Mammary epithelial cell (primary cell): ENCODE measurements at regions of chr13 and their contacts with region 1.

Region 1: GRCh38 chr13:34357435-34358232 is 539.7 kb downstream of the RFC3 start:
- DNase-seq: peak; percentile 79
- H3K4me3 ChIP-seq: no peak overlapping the region
- H3K27ac ChIP-seq: peak overlapping the region; percentile 40
- H3K4me1 ChIP-seq: peaks cover 47% of the 10 kb centered on the region
- H3K27me3 ChIP-seq: no peaks in the 10 kb centered on the region
- CTCF ChIP-seq: no peak

Region 2: GRCh38 chr13:33761740-33762139 is 595.9 kb before region 1 on chr13:
- CTCF ChIA-PET with region 1: no interaction called
- dilution Hi-C with region 1: no loop called
- in situ Hi-C with region 1: no loop called
- intact Hi-C with region 1: no loop called
- DNase-seq: peak; percentile 12
- H3K4me3 ChIP-seq: no peak overlapping the region
- H3K27ac ChIP-seq: no peak overlapping the region
- H3K4me1 ChIP-seq: no peaks in the 10 kb centered on the region
- H3K27me3 ChIP-seq: no peaks in the 10 kb centered on the region
- CTCF ChIP-seq: peak in 1 of 2 donors; percentile 26

Region 3: GRCh38 chr13:34300559-34300958 is 57.1 kb before region 1 on chr13:
- CTCF ChIA-PET with region 1: no interaction called
- dilution Hi-C with region 1: no loop called
- in situ Hi-C with region 1: no loop called
- intact Hi-C with region 1: loop called (anchors 2 kb)
- DNase-seq: peak; percentile 5
- H3K4me3 ChIP-seq: no peak overlapping the region
- H3K27ac ChIP-seq: no peak overlapping the region
- H3K4me1 ChIP-seq: peaks cover 30% of the 10 kb centered on the region
- H3K27me3 ChIP-seq: no peaks in the 10 kb centered on the region
- CTCF ChIP-seq: no peak

Region 4: DNA sequence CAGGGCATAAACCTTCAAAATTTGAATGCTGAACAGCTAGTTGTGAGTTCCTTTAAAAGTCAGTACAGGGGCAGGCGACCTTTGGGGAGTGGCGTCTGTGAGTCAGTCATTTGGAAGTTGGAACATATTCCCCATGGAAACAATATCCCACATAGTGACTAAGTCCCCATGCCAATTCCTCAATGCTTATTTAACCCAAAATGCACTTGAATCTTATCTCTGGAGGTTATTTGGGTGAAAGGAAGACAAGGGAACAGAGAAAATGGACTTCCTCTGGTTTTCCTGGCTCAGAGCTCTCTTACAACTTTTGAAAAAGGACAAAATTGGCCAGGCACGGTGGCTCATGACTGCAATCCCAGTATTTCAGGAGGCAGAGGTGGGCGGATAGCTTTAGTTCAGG is 105.2 kb after region 1 on chr13:
- CTCF ChIA-PET with region 1: no interaction called
- dilution Hi-C with region 1: no loop called
- in situ Hi-C with region 1: no loop called
- intact Hi-C with region 1: loop called (anchors 10 kb)
- DNase-seq: peak; percentile 89
- H3K4me3 ChIP-seq: no peak overlapping the region
- H3K27ac ChIP-seq: peak overlapping the region; percentile 76
- H3K4me1 ChIP-seq: peaks cover 27% of the 10 kb centered on the region
- H3K27me3 ChIP-seq: no peaks in the 10 kb centered on the region
- CTCF ChIP-seq: no peak

Region 5: DNA sequence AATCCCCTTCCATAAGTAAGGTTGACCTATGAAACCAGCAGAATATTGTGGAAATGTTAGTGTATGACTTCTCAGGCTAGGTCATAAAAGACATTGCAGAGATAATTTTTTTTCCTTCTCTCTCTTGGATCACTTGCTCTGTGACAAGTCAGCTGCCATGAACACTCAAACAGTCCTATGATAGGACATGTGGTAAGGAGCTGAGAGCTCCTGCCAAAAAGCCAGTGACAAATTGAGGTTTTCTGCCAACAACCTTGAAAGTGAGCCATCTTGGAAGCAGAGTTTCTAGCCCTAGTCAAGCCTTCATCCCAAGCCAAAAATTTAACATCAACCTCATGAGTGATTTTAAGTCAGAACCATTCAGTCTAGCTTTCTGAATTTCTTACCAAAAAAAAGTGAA is 313.5 kb after region 1 on chr13:
- CTCF ChIA-PET with region 1: no interaction called
- dilution Hi-C with region 1: no loop called
- in situ Hi-C with region 1: no loop called
- intact Hi-C with region 1: no loop called
- DNase-seq: no peak
- H3K4me3 ChIP-seq: no peak overlapping the region
- H3K27ac ChIP-seq: no peak overlapping the region
- H3K4me1 ChIP-seq: no peaks in the 10 kb centered on the region
- H3K27me3 ChIP-seq: no peaks in the 10 kb centered on the region
- CTCF ChIP-seq: no peak

Region 6: GRCh38 chr13:34951528-34951927 is 593.9 kb after region 1 on chr13:
- CTCF ChIA-PET with region 1: no interaction called
- dilution Hi-C with region 1: no loop called
- in situ Hi-C with region 1: no loop called
- intact Hi-C with region 1: no loop called
- DNase-seq: no peak
- H3K4me3 ChIP-seq: no peak overlapping the region
- H3K27ac ChIP-seq: no peak overlapping the region
- H3K4me1 ChIP-seq: no peaks in the 10 kb centered on the region
- H3K27me3 ChIP-seq: peaks cover 3% of the 10 kb centered on the region
- CTCF ChIP-seq: no peak